MCF 10A (cell line): ENCODE measurements at regions of chr7 and their contacts with region 1.

Region 1: GRCh38 chr7:134943764-134944400 is 42.4 kb upstream of the AGBL3 start:
- DNase-seq: peak; percentile 42
- H3K4me3 Mint-ChIP-seq: no peak overlapping the region
- H3K27ac Mint-ChIP-seq: no peak overlapping the region
- H3K4me1 Mint-ChIP-seq: peaks cover 10% of the 10 kb centered on the region
- H3K27me3 Mint-ChIP-seq: no peaks in the 10 kb centered on the region
- CTCF ChIP-seq: peak; percentile 52

Region 2: GRCh38 chr7:134613623-134614347 is 330.1 kb before region 1 on chr7:
- CTCF ChIA-PET with region 1: interaction called, 7 read pairs
- POLR2A ChIA-PET with region 1: no interaction called
- intact Hi-C with region 1: loop called (anchors 5 kb)
- DNase-seq: peak; percentile 97
- H3K4me3 Mint-ChIP-seq: no peak overlapping the region
- H3K27ac Mint-ChIP-seq: peak overlapping the region; percentile 85
- H3K4me1 Mint-ChIP-seq: peaks cover 39% of the 10 kb centered on the region
- H3K27me3 Mint-ChIP-seq: no peaks in the 10 kb centered on the region
- CTCF ChIP-seq: no peak

Region 3: DNA sequence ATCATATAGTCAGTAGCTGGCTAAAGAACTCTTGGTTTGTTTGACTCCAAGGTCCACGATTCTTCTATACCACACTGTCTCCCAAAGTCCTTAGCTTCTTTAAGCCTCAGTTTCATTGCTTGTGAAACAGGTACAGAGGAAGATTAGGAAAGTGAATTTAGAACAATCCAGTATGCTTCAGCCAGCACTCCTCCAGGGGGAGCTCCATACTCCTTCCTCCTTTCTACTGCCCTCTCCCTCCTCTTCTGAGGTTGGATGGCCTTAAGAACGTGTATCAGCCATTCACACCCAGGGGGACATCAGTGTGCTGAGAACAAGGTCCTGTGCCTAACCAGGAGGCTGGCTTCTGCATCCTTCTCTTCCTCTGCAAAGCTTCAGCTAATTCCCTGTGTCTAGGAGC is 219.3 kb before region 1 on chr7:
- CTCF ChIA-PET with region 1: interaction called, 7 read pairs
- POLR2A ChIA-PET with region 1: interaction called, 7 read pairs
- intact Hi-C with region 1: loop called (anchors 1 kb)
- DNase-seq: peak; percentile 65
- H3K4me3 Mint-ChIP-seq: no peak overlapping the region
- H3K27ac Mint-ChIP-seq: no peak overlapping the region
- H3K4me1 Mint-ChIP-seq: no peaks in the 10 kb centered on the region
- H3K27me3 Mint-ChIP-seq: no peaks in the 10 kb centered on the region
- CTCF ChIP-seq: peak; percentile 67

Region 4: GRCh38 chr7:134878731-134879295 is 65.1 kb before region 1 on chr7:
- CTCF ChIA-PET with region 1: interaction called, 3 read pairs
- POLR2A ChIA-PET with region 1: interaction called, 4 read pairs
- intact Hi-C with region 1: loop called (anchors 2 kb)
- DNase-seq: peak; percentile 13
- H3K4me3 Mint-ChIP-seq: no peak overlapping the region
- H3K27ac Mint-ChIP-seq: no peak overlapping the region
- H3K4me1 Mint-ChIP-seq: peaks cover 5% of the 10 kb centered on the region
- H3K27me3 Mint-ChIP-seq: no peaks in the 10 kb centered on the region
- CTCF ChIP-seq: peak; percentile 9